Activated CD4-positive, alpha-beta T cell treated with anti-CD3 and anti-CD28 coated beads, Interleukin-2, amount 10 ng/mL, durations not matched to agents 7 days and 5 days (primary cell): ENCODE measurements at regions of chr2 and their contacts with region 1.

Region 1: GRCh38 chr2:26964446-26965130 is 5.8 kb upstream of the MAPRE3 start:
- DNase-seq: no peak
- H3K4me3 Mint-ChIP-seq: no peak overlapping the region
- H3K27ac Mint-ChIP-seq: no peak overlapping the region
- H3K4me1 Mint-ChIP-seq: peaks cover 8% of the 10 kb centered on the region
- H3K27me3 Mint-ChIP-seq: peaks cover 26% of the 10 kb centered on the region

Region 2: DNA sequence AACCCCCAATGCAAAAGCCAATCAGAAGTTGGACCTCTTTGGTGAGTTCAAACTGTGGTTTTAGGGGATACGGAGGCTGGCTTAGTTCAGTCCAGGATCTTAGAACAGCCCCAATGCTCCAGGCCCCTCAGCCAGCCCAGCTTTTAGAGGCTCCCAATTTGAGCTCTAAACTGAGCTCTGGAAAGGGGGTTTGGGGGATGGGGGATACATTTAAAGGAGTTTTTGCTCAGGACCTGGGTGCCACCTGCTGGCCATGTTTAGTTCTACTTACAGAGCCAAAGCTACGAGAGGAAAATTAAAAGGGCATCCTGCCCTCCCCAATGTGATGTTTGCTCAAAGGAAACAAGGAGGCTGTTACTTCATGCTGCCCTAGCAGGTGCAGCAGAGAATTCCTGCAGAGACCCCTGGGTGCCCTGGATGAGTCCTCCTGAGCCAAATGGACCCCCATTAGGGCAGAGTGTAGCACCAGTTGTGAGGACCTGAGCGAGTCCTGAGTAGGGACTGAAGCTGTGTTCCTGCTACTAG is 52.3 kb after region 1 on chr2:
- CTCF ChIA-PET with region 1: interaction called, 40 read pairs
- POLR2A ChIA-PET with region 1: no interaction called
- DNase-seq: peak; percentile 61
- H3K4me3 Mint-ChIP-seq: no peak overlapping the region
- H3K27ac Mint-ChIP-seq: no peak overlapping the region
- H3K4me1 Mint-ChIP-seq: peaks cover 5% of the 10 kb centered on the region
- H3K27me3 Mint-ChIP-seq: no peaks in the 10 kb centered on the region